Endothelial cell of umbilical vein (primary cell): ENCODE measurements at regions of chr3 and their contacts with region 1.

Region 1: DNA sequence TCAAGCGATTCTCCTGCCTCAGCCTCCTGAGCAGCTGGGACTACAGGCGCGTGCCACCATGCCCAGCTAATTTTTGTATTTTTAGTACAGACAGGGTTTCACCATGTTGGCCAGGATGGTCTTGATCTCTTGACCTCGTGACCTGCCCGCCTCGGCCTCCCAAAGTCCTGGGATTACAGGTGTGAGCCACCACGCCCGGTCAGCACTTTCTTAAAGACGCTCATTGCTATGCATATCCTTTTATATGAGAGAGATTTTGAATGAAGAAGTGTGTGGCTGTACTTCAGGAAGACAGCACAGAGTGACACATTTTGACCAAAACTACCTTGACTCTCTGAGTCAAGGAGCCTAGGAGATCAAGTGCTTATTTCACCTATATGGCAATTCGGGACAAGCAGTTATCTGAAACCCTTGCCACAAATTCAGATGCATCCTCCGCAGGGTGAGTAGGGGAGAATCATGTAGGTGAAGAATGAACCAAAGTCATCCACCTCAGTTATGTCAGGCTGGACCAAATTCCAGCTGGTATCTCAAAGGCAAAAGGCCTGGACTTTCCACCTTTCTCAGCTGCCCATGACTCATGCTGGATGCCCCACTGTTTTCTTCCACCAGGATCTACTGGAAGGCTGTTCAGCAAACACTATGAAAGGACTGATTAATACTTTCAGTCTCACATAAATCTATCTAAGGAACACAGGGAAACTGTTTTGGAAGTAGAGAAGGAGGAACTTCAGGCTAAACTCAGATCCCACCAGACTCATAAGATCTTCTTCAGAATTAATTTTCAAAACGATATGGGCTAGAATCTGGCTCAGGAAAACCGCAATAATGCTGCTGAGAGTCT is 31.9 kb downstream of the SUSD5 start:
- DNase-seq: peak; percentile 93
- H3K4me3 ChIP-seq: peak overlapping the region in 1 of 3 experiments; percentile 28
- H3K27ac ChIP-seq: peak overlapping the region; percentile 92
- H3K4me1 ChIP-seq: peaks cover 11% of the 10 kb centered on the region
- H3K27me3 ChIP-seq: no peaks in the 10 kb centered on the region
- CTCF ChIP-seq: no peak
- POLR2A ChIP-seq: no peak

Region 2: DNA sequence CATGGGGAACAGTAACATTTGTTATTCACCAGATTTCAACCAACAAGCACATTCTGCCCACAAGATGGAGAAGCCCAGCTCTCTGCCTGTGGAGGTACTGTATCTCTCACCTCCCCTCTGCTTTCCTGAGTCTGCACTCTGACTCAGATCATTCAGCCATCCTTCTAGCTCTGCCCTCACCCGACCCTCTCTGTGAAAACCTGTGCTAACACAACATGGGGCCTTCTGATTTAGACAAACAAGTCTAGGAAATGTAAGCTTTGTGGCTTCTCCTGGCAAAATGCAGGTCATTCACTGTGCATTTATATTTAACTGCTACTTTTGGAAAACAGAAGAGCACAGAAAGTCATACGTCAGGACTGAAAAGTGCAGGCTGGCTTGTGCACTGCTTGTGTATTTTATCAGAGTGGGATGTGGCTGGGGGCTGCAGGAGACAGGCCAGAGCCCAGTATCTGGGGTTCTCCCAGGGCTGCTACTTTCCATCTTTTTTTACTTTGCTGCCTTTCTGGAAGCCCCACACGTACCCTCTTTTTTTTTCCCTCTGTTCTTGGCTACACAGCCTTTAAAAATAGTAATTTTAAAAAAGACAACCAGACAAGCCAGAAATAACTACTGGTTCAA is 18.9 kb before region 1 on chr3:
- CTCF ChIA-PET with region 1: no interaction called
- POLR2A ChIA-PET with region 1: no interaction called
- dilution Hi-C with region 1: no loop called
- intact Hi-C with region 1: no loop called
- DNase-seq: peak; percentile 38
- H3K4me3 ChIP-seq: no peak overlapping the region
- H3K27ac ChIP-seq: no peak overlapping the region
- H3K4me1 ChIP-seq: no peaks in the 10 kb centered on the region
- H3K27me3 ChIP-seq: no peaks in the 10 kb centered on the region
- CTCF ChIP-seq: no peak
- POLR2A ChIP-seq: no peak

Region 3: DNA sequence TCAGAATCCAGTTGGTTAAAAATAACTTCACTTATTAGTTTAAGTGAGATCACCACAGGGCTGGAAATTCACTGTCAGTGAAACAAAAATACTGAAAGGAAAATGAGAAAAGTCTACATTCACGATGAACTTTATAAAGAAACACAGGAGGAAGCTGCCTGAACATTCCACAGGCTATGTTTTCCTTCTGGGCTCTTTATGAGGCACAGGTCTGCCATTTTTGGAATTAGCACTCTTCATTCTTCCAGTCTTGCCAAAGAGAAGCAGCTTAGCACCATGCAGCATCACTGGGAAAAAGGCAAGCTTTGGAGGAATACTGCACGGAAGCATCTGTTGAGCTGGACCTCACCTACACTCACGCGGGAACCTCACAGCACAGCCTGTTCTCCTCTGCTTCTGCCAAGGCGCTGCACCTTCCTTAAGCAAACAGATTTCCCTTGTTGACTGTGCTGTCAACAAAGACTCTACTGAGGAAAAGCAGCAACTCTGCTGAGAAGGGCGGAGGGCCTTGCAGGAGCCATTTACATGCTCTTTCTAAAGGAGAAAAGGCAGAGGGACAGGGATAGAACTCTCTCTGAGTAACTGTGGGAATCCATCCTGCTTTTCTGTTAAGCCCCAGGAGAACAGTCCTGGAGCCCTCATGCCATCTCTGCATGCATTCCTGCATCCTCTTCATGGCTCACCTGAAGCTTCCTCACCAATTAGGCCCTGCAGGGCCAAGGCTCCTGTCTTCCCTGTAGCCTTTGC is 16.1 kb after region 1 on chr3:
- CTCF ChIA-PET with region 1: interaction called, 11 read pairs
- POLR2A ChIA-PET with region 1: no interaction called
- dilution Hi-C with region 1: no loop called
- intact Hi-C with region 1: loop called (anchors 2 kb)
- DNase-seq: peak; percentile 8
- H3K4me3 ChIP-seq: no peak overlapping the region
- H3K27ac ChIP-seq: no peak overlapping the region
- H3K4me1 ChIP-seq: no peaks in the 10 kb centered on the region
- H3K27me3 ChIP-seq: no peaks in the 10 kb centered on the region
- CTCF ChIP-seq: no peak
- POLR2A ChIP-seq: no peak

Region 4: GRCh38 chr3:33211444-33211843 is 24.7 kb after region 1 on chr3:
- CTCF ChIA-PET with region 1: no interaction called
- POLR2A ChIA-PET with region 1: no interaction called
- dilution Hi-C with region 1: no loop called
- intact Hi-C with region 1: loop called (anchors 1 kb)
- DNase-seq: peak; percentile 96
- H3K4me3 ChIP-seq: no peak overlapping the region
- H3K27ac ChIP-seq: peak overlapping the region; percentile 50
- H3K4me1 ChIP-seq: peaks cover 12% of the 10 kb centered on the region
- H3K27me3 ChIP-seq: no peaks in the 10 kb centered on the region
- CTCF ChIP-seq: no peak
- POLR2A ChIP-seq: no peak